Ovary (tissue), 10 donors: ENCODE measurements at regions of chr1 and their contacts with region 1.

Region 1: DNA sequence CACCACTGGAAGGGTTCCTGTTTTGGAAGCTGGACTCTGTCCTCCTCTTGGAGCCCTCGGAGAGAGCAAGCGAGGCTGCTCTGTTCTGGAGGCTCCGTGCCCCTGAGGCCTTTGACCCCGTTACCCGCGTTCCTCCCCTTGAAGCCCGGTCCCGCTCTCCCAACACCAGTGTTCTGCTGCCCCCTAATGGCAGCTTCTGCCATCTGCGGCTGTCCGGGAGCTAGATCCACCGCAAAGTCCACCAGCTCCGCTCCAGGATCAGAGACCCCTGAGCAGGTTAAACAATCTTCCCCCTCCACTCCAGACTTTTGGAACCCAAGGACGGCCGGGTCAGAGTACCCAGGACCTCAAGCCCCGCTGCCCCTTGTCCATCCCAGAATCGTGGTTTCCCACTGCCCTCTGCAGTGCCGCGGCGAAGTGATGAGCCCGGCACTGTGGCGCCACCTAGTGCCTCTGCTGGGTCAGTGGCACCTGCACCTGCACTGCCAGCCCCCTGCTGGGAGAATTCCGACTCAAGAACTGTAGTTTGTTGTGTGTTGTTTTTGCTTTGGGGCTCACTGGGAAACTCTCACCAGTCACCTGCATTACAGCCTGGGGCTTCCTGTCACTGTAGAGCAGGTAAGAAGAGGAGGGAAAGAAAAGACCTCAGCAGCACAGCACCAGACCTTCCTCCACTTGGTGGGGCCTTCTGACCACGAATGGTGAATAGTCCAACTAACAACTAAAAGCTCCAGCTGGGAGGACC is 63.5 kb upstream of the NFASC start:
- DNase-seq: peak; percentile 77 to 87 (median 83)
- H3K4me3 ChIP-seq: peak overlapping the region; percentile 27
- H3K27ac ChIP-seq: no peak overlapping the region
- H3K4me1 ChIP-seq: peaks cover 1% of the 10 kb centered on the region
- H3K27me3 ChIP-seq: no peaks in the 10 kb centered on the region
- CTCF ChIP-seq: peak; percentile 87 to 98 (median 95)
- EP300 ChIP-seq: no peak
- POLR2A ChIP-seq: no peak

Region 2: DNA sequence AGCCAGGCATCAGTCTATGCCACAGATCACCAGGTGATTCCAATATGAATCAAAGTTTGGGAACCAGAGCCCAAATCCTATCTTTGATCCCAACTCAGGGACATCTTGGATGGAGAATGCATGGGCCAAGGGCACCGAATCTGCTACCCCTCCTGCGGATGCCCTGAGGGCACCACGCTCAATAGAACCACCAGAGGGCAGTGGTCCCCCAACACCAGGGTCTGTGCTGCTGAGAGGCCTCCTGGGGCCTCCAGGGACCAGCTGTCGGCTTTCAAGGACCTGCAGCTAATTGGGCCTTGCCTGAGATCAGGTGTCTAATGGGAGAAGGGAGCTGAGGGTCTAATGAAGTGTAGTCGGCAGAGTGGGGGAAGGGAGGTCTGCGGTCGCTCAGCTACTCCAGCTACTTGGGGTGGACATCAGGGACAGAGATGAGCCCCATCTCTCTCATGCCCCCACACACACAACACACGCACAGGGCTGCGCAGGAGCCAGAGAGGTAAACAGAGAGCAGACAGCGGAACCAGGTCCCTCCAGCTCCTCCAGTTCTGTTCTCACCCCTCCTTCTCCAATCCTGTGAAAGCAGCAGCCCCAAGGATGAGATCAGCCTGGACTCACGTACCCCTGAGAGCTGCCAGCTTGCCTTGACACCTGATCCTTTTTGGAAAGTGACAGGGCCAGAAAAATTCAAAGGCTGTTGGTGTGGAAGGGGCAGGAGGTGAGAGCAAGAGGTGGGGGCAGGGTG is 360.6 kb before region 1 on chr1:
- intact Hi-C with region 1: loop called in 1 of 4 experiments (anchors 10 kb)
- DNase-seq: peak; percentile 46 to 69 (median 65)
- H3K4me3 ChIP-seq: no peak overlapping the region
- H3K27ac ChIP-seq: no peak overlapping the region
- H3K4me1 ChIP-seq: no peaks in the 10 kb centered on the region
- H3K27me3 ChIP-seq: no peaks in the 10 kb centered on the region
- CTCF ChIP-seq: peak in 2 of 3 donors; percentile 43 to 68
- EP300 ChIP-seq: no peak
- POLR2A ChIP-seq: no peak

Region 3: GRCh38 chr1:204565617-204566582 is 241.2 kb before region 1 on chr1:
- intact Hi-C with region 1: loop called in 2 of 4 experiments (anchors 2 to 5 kb)
- DNase-seq: peak in 3 of 5 donors; percentile 32 to 53 (median 44)
- H3K4me3 ChIP-seq: no peak overlapping the region
- H3K27ac ChIP-seq: no peak overlapping the region
- H3K4me1 ChIP-seq: no peaks in the 10 kb centered on the region
- H3K27me3 ChIP-seq: no peaks in the 10 kb centered on the region
- CTCF ChIP-seq: peak; percentile 15 to 72 (median 56)
- EP300 ChIP-seq: no peak
- POLR2A ChIP-seq: no peak

Region 4: DNA sequence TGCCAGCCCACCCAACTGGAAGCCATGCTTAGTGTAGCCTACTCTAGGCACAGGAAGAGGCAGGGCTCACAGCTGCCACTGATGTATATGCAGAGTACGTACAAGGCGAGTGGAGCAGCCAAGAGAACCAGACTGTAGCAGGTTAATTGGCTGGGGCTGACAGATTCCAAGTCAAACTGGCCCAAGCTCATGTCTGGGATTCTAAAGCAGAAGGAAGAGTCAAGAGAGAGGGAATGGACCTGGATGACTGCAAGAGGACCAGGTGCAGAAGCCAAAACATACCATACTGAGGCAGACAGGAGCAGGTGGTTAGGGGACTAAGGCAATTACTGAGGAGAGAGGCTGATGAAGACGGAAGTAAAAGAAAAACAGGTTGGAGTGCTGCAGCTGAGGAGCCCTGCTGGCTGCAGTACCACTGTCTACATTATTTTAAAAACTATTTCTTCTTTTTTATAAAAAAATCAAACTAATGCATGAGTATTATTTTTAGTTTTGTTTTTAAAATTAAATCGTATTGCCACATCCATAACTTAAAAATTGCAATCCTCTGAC is 70.2 kb before region 1 on chr1:
- intact Hi-C with region 1: no loop called
- DNase-seq: no peak
- H3K4me3 ChIP-seq: no peak overlapping the region
- H3K27ac ChIP-seq: no peak overlapping the region
- H3K4me1 ChIP-seq: no peaks in the 10 kb centered on the region
- H3K27me3 ChIP-seq: no peaks in the 10 kb centered on the region
- CTCF ChIP-seq: no peak
- EP300 ChIP-seq: no peak
- POLR2A ChIP-seq: no peak

Region 5: GRCh38 chr1:205056188-205056611 is 249.1 kb after region 1 on chr1:
- intact Hi-C with region 1: loop called in 1 of 4 experiments (anchors 10 kb)
- DNase-seq: no peak
- H3K4me3 ChIP-seq: no peak overlapping the region
- H3K27ac ChIP-seq: no peak overlapping the region
- H3K4me1 ChIP-seq: no peaks in the 10 kb centered on the region
- H3K27me3 ChIP-seq: no peaks in the 10 kb centered on the region
- CTCF ChIP-seq: no peak
- EP300 ChIP-seq: no peak
- POLR2A ChIP-seq: no peak